CD4-positive, alpha-beta memory T cell (primary cell): ENCODE measurements at regions of chr7 and their contacts with region 1.

Region 1: GRCh38 chr7:25259587-25260243 is 31.4 kb upstream of the NPVF start:
- DNase-seq: peak; percentile 61 to 71 (median 66)
- H3K4me3 ChIP-seq: no peak overlapping the region
- H3K4me3 Mint-ChIP-seq: peak overlapping the region in 6 of 8 donors; percentile 46 to 77 (median 55)
- H3K27ac ChIP-seq: no peak overlapping the region
- H3K27ac Mint-ChIP-seq: peak overlapping the region in 4 of 7 donors; percentile 34 to 57 (median 53)
- H3K4me1 ChIP-seq: peaks cover 25% of the 10 kb centered on the region
- H3K4me1 Mint-ChIP-seq: peaks cover 18 to 29% (median 23%) of the 10 kb centered on the region in 4 donors
- H3K27me3 ChIP-seq: no peaks in the 10 kb centered on the region
- H3K27me3 Mint-ChIP-seq: peaks cover 4 to 14% of the 10 kb centered on the region in 2 donors

Region 2: DNA sequence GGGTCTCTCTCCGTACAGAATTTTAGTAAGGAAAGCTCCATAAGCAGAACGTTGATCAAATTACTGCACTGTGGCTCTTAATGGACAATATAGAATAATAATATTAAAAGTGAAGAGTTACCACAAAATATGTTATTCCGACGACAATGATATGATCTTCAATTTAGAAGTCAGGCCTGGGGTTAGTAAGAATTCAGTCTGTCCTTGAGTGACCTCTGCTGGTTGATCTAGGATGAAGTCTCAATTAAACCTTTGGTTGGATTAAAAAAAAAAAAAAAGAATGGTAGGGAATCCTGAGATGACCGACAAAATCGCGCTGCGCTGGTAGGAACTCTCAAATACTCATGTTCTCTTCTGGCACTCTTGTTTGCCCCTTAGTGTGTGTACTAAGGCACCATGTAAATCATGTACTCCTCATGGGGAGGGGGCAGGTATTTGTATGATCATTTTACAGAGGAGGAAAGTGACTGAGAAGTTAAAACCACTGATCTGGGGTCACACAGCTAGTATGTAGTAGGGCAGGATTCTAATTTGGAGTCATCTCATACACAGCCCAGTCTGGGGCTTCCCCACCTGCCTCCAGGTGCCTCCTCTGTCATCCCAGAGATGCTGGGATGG is 129.9 kb after region 1 on chr7:
- CTCF ChIA-PET with region 1: interaction called, 12 read pairs
- POLR2A ChIA-PET with region 1: no interaction called
- intact Hi-C with region 1: loop called (anchors 1 kb)
- DNase-seq: peak in 4 of 5 donors; percentile 7 to 19 (median 12)
- H3K4me3 ChIP-seq: no peak overlapping the region
- H3K4me3 Mint-ChIP-seq: no peak overlapping the region
- H3K27ac ChIP-seq: no peak overlapping the region
- H3K27ac Mint-ChIP-seq: no peak overlapping the region
- H3K4me1 ChIP-seq: no peaks in the 10 kb centered on the region
- H3K4me1 Mint-ChIP-seq: no peaks in the 10 kb centered on the region
- H3K27me3 ChIP-seq: no peaks in the 10 kb centered on the region
- H3K27me3 Mint-ChIP-seq: peaks cover 4 to 5% of the 10 kb centered on the region in 2 donors

Region 3: DNA sequence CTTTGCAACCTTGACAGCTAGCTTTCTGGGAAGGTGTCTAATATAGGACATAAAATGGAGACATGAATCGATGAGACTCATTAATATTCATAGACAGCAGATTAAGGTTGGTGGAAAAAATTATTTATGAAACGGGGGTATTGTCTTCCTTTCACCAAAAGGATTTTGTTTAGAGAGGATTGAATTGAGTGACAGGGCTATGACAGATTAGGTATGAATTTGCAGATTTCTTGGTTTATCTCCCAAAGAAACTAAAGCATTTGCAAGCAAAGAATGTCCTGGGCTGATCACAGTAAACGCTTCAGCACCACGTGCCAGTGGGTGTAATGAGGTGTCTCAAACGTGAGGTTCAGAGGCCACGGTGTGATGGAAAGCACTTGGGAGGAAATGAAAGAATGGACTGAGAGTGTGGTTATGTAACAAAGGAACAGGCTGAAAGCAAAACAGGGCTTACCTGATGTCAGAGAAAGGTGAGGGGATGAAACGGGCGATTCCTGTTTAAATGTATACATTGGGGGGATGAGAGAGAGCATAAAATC is 297.7 kb after region 1 on chr7:
- CTCF ChIA-PET with region 1: interaction called, 195 read pairs
- POLR2A ChIA-PET with region 1: no interaction called
- intact Hi-C with region 1: no loop called
- DNase-seq: no peak
- H3K4me3 ChIP-seq: no peak overlapping the region
- H3K4me3 Mint-ChIP-seq: peak overlapping the region in 1 of 8 donors; percentile 65
- H3K27ac ChIP-seq: no peak overlapping the region
- H3K27ac Mint-ChIP-seq: no peak overlapping the region
- H3K4me1 ChIP-seq: no peaks in the 10 kb centered on the region
- H3K4me1 Mint-ChIP-seq: peaks cover 3 to 7% (median 5%) of the 10 kb centered on the region in 4 donors
- H3K27me3 ChIP-seq: no peaks in the 10 kb centered on the region
- H3K27me3 Mint-ChIP-seq: peaks cover 8 to 9% of the 10 kb centered on the region in 2 donors

Region 4: GRCh38 chr7:25572423-25572822 is 312.7 kb after region 1 on chr7:
- CTCF ChIA-PET with region 1: interaction called, 195 read pairs
- POLR2A ChIA-PET with region 1: interaction called, 3 read pairs
- intact Hi-C with region 1: no loop called
- DNase-seq: no peak
- H3K4me3 ChIP-seq: no peak overlapping the region
- H3K4me3 Mint-ChIP-seq: no peak overlapping the region
- H3K27ac ChIP-seq: no peak overlapping the region
- H3K27ac Mint-ChIP-seq: no peak overlapping the region
- H3K4me1 ChIP-seq: no peaks in the 10 kb centered on the region
- H3K4me1 Mint-ChIP-seq: no peaks in the 10 kb centered on the region
- H3K27me3 ChIP-seq: no peaks in the 10 kb centered on the region
- H3K27me3 Mint-ChIP-seq: peaks cover 0 to 5% of the 10 kb centered on the region in 2 donors

Region 5: GRCh38 chr7:25851332-25852210 is 591.9 kb after region 1 on chr7:
- CTCF ChIA-PET with region 1: interaction called, 3 read pairs
- POLR2A ChIA-PET with region 1: no interaction called
- intact Hi-C with region 1: loop called (anchors 1 kb)
- DNase-seq: peak; percentile 39 to 55 (median 45)
- H3K4me3 ChIP-seq: no peak overlapping the region
- H3K4me3 Mint-ChIP-seq: peak overlapping the region; percentile 6 to 91 (median 78)
- H3K27ac ChIP-seq: no peak overlapping the region
- H3K27ac Mint-ChIP-seq: peak overlapping the region in 5 of 7 donors; percentile 58 to 91 (median 89)
- H3K4me1 ChIP-seq: peaks cover 20% of the 10 kb centered on the region
- H3K4me1 Mint-ChIP-seq: peaks cover 5 to 30% (median 11%) of the 10 kb centered on the region in 4 donors
- H3K27me3 ChIP-seq: peaks cover 59% of the 10 kb centered on the region
- H3K27me3 Mint-ChIP-seq: peaks cover 49 to 53% of the 10 kb centered on the region in 2 donors